ENCODE measurements at regions of chr7 and their contacts with region 1.

Region 1: DNA sequence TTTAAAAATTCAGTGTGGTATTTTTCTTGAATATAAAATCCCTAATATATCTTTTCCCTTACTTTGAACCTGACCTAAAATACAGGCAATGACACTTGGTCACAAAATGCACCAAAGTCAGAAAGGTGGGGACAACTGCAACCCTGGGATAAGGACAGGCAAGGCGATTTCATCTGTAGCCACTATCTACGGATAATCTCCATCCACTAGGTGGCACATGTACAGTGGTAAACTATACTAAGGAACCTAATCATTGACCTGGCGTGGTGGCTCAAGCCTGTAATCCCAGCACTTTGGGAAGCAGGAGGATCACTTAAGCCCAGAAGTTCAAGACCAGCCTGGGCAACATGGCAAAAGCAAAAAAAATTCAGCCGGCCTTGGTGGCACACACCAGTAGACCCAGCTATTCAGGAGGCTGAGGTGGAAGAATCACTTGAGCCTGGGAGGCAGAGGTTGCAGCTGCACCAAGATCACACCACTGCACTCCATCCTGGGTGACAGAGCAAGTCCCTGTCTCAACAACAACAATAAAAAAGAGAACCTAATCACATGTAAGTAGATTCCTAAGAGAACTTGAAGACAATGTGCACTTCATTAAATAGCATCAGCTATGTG is 98.9 kb downstream of the KMT2C start:
- DNase-seq: no peak
- ATAC-seq: no peak

Region 2: DNA sequence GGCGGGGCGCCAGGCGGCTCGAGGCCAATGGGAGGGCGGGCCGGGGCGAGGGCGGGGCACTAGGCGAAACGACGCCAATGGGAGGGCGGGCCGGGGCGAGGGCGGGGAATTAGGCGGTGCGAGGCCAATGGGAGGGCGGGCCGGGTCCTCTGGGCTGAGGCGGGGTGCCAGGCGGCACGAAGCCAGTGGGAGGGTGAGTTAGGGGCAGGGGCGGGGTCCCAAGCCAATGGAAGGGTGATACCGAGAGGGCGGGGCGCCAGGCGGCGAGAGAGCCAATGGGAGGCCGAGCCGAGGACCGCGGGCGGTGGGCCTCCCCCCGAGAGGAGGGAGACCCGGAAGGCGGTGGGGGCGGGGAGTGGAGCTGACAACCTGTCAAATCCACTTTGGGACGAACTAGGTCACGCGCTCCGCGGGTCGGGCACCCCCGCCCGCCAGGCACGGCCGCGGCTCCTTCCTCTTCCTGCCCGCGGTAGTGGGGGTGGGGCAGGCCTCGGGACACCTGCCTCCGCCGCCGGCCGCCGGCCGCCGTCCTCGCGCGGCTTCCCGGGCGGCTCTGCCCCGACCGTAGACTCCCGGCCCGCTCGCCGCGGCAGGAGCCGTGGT is 126.9 kb after region 1 on chr7:
- intact Hi-C with region 1: loop called (anchors 5 kb)
- DNase-seq: peak; percentile 100
- ATAC-seq: peak; percentile 96

Region 3: DNA sequence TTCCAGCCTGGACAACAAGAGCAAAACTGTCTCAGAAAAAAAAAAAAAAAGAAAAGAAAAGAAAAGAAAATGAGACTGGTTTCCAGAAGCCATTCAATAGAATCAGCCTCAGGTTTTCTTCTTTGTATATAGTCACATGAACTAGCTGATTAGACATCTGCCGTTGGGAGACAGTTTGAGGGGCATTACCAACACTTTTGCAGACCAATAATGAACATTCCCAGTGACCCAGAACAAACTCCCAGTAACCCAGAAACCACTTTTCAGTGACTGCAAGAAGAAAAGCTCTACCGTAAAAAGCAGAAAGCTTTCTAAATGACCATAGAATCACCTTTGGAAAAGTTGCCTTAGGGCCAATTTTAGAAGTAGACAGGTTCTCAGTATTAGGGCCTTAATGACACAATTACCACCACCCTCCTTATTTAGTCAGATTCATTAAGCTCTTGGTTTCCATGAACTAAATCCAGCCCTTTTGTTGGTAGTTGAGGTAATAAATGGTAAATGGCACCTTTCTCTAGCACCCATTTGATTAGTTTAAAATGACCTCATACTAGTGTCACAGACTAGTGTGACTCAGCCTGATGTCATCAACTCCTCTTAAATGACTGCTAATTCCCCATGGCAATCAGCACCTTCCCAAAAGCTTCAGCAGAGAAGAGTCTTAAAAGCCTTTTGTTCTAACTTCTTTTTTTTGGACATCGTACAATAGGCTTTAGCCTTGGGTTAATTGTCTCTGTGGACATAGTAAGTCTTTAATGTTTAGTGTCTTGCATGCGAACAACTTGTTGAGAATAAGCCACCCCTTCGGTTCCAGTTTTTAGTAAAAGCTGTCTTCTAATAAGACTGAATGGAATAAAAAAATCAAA is 372.7 kb after region 1 on chr7:
- intact Hi-C with region 1: loop called (anchors 5 kb)
- DNase-seq: no peak
- ATAC-seq: no peak

Measured in Right ventricle myocardium inferior (tissue), 1 donor.